Heart left ventricle (tissue), 16 donors: ENCODE measurements at regions of chr16 and their contacts with region 1.

Region 1: GRCh38 chr16:21713549-21714368 is 50.0 kb downstream of the OTOA start:
- DNase-seq: no peak
- ATAC-seq: no peak
- H3K4me3 ChIP-seq: no peak overlapping the region
- H3K27ac ChIP-seq: no peak overlapping the region
- H3K4me1 ChIP-seq: peaks cover 0 to under 1% (median 0%) of the 10 kb centered on the region in 12 donors
- H3K27me3 ChIP-seq: no peaks in the 10 kb centered on the region
- CTCF ChIP-seq: no peak
- POLR2A ChIP-seq: no peak

Region 2: GRCh38 chr16:21656795-21657768 is 56.7 kb before region 1 on chr16:
- intact Hi-C with region 1: loop called (anchors 1 to 10 kb)
- DNase-seq: no peak
- ATAC-seq: no peak
- H3K4me3 ChIP-seq: no peak overlapping the region
- H3K27ac ChIP-seq: peak overlapping the region in 1 of 12 donors; percentile 38
- H3K4me1 ChIP-seq: peaks cover 0 to 71% (median 0%) of the 10 kb centered on the region in 12 donors
- H3K27me3 ChIP-seq: no peaks in the 10 kb centered on the region
- CTCF ChIP-seq: peak; percentile 75 to 92 (median 82)
- POLR2A ChIP-seq: no peak

Region 3: GRCh38 chr16:21663889-21664647 is 49.7 kb before region 1 on chr16 and contains the start of gene OTOA:
- intact Hi-C with region 1: loop called in 6 of 10 experiments (anchors 5 to 10 kb)
- DNase-seq: no peak
- ATAC-seq: peak in 2 of 4 donors; percentile 39 to 49
- H3K4me3 ChIP-seq: peak within 1 kb of the TSS in 10 of 12 donors; percentile 20 to 54 (median 37)
- H3K27ac ChIP-seq: no peak within 1 kb of the TSS
- H3K4me1 ChIP-seq: peaks cover 0 to 18% (median 0%) of the 10 kb centered on the region in 12 donors
- H3K27me3 ChIP-seq: peaks cover 0 to 22% (median 6%) of the 10 kb centered on the region in 9 donors
- CTCF ChIP-seq: no peak
- POLR2A ChIP-seq: no peak
- total RNA-seq, gene OTOA: 0.16 to 0.41 (median 0.37) TPM in 3 of 9 donors, not detected in the others